Esophagus muscularis mucosa (tissue), 4 donors: ENCODE measurements at regions of chr12 and their contacts with region 1.

Region 1: GRCh38 chr12:45170456-45171042 is 45.3 kb upstream of the ANO6 start:
- DNase-seq: peak; percentile 94
- H3K4me3 ChIP-seq: no peak overlapping the region
- H3K27ac ChIP-seq: no peak overlapping the region
- H3K4me1 ChIP-seq: peaks cover 0 to 9% (median 6%) of the 10 kb centered on the region in 4 donors
- H3K27me3 ChIP-seq: no peaks in the 10 kb centered on the region
- CTCF ChIP-seq: peak; percentile 76 to 94 (median 77)
- EP300 ChIP-seq: no peak
- POLR2A ChIP-seq: no peak

Region 2: GRCh38 chr12:44875954-44876553 is 294.5 kb before region 1 on chr12 and contains the start of gene NELL2:
- intact Hi-C with region 1: no loop called
- DNase-seq: no peak
- H3K4me3 ChIP-seq: peak within 1 kb of the TSS; percentile 57 to 65 (median 60)
- H3K27ac ChIP-seq: no peak within 1 kb of the TSS
- H3K4me1 ChIP-seq: peaks cover 16 to 26% (median 25%) of the 10 kb centered on the region in 4 donors
- H3K27me3 ChIP-seq: peaks cover 0 to 50% (median 18%) of the 10 kb centered on the region in 4 donors
- CTCF ChIP-seq: no peak
- EP300 ChIP-seq: no peak
- POLR2A ChIP-seq: no peak
- total RNA-seq, gene NELL2: 0.42 to 5.8 (median 3.3) TPM

Region 3: GRCh38 chr12:45388545-45388944 is 218.0 kb after region 1 on chr12:
- intact Hi-C with region 1: loop called (anchors 5 kb)
- DNase-seq: no peak
- H3K4me3 ChIP-seq: no peak overlapping the region
- H3K27ac ChIP-seq: no peak overlapping the region
- H3K4me1 ChIP-seq: peaks cover 0 to 19% (median 4%) of the 10 kb centered on the region in 4 donors
- H3K27me3 ChIP-seq: no peaks in the 10 kb centered on the region
- CTCF ChIP-seq: peak; percentile 51 to 67 (median 64)
- EP300 ChIP-seq: no peak
- POLR2A ChIP-seq: no peak